ENCODE measurements at regions of chr1 and their contacts with region 1.

Region 1: GRCh38 chr1:151934048-151934493 is 24.8 kb upstream of the THEM4 start:
- DNase-seq: peak; percentile 16
- H3K4me3 ChIP-seq: no peak overlapping the region
- H3K27ac ChIP-seq: no peak overlapping the region
- H3K27me3 ChIP-seq: peaks cover 17% of the 10 kb centered on the region
- CTCF ChIP-seq: peak; percentile 94

Region 2: DNA sequence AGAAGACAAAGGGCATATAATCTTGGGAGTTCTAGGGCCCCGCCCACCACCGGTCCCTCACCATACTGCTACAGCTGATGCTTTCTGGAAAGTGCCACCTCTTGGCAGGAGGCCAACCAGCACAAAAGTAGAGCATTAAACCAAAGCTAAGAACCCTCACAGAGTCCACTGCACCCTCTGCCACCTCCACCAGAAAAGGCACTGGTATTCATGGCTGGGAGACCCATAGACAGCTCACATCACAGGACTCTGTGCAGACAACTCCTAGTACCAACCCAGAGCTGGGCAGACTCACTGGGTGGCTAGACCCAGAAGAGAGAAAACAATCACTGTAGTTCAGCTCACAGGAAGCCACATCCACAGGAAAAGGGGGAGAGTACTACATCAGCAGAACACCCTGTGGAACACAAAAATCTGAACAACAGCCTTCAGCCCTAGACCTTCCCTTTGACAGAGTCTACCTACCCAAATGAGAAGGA is 35.5 kb before region 1 on chr1:
- CTCF ChIA-PET with region 1: no interaction called
- POLR2A ChIA-PET with region 1: no interaction called
- DNase-seq: no peak
- H3K4me3 ChIP-seq: no peak overlapping the region
- H3K27ac ChIP-seq: no peak overlapping the region
- H3K27me3 ChIP-seq: no peaks in the 10 kb centered on the region
- CTCF ChIP-seq: no peak

Region 3: DNA sequence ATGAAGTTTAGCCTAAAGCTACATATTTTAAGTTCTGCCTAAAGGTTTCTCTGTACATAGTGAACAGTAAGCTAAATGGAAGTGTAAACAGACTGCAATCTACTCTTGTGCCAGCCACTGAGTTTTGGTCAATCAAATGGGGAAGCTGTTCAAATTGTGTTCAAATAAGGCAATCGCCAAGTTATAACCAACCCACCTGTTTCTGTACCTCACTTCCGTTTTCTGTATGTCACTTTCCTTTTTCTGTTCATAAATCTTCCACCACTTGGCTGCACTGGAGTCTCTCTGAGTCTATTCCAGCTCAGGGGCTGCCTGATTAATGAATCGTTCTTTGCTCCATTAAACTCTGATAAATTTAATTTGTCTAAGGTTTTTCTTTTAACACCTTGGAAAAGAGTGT is 13.9 kb before region 1 on chr1:
- CTCF ChIA-PET with region 1: interaction called, 20 read pairs
- POLR2A ChIA-PET with region 1: no interaction called
- DNase-seq: no peak
- H3K4me3 ChIP-seq: no peak overlapping the region
- H3K27ac ChIP-seq: no peak overlapping the region
- H3K27me3 ChIP-seq: peaks cover 17% of the 10 kb centered on the region
- CTCF ChIP-seq: no peak

Region 4: DNA sequence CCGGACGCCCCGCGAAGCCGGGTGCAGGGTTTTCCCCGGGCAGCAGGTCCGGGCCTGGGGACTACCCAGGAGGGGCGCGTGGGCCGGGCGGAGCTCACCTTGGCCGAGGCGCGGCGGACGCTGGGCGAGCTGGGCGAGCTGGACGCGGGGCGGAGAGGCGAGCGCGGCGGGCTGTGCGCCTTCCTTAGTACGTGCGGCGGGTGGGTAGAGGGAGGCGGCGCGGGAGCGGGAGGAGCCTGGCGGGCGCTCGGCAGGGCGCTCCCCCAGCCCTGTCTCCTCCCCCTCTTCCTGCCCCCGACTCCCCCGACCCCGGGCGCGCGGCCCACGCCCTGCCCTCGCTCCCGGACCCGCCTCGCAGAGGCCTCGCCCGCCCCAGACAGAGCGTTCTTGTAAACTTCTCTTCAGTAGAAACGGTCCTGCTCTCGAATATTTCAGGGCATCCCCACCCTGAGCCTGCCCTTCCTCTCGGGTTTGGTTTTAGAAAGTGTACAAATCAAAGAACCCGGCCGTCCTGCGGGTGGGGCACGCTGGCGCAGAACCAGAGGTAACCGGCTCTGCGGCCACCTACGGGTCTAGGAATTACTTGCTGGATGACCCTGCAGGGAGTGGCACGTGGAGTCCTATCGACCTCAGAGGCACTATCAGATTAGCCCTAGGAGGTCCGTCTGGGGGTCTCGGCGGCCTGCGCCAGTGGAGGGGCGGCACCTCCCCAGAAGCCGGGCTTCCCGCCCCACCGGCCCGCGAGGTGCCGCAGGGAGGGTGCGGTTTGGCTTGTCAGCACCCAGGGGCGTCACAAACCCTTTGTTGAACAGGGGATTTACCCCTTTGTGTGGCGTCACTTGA is 59.8 kb after region 1 on chr1 and contains the start of gene S100A10:
- CTCF ChIA-PET with region 1: interaction called, 251 read pairs
- POLR2A ChIA-PET with region 1: no interaction called
- DNase-seq: no peak
- H3K4me3 ChIP-seq: peak within 1 kb of the TSS; percentile 94
- H3K27ac ChIP-seq: peak within 1 kb of the TSS; percentile 61
- H3K27me3 ChIP-seq: no peaks in the 10 kb centered on the region
- CTCF ChIP-seq: no peak
- polyA plus RNA-seq, gene S100A10: 188 and 200 TPM in 2 replicates

Region 5: GRCh38 chr1:152013664-152014237 is 79.7 kb after region 1 on chr1:
- CTCF ChIA-PET with region 1: interaction called, 65 read pairs
- POLR2A ChIA-PET with region 1: no interaction called
- DNase-seq: no peak
- H3K4me3 ChIP-seq: no peak overlapping the region
- H3K27ac ChIP-seq: no peak overlapping the region
- H3K27me3 ChIP-seq: peaks cover 24% of the 10 kb centered on the region
- CTCF ChIP-seq: peak; percentile 76

Region 6: GRCh38 chr1:152034646-152035405 is 100.8 kb after region 1 on chr1:
- CTCF ChIA-PET with region 1: interaction called, 10 read pairs
- POLR2A ChIA-PET with region 1: no interaction called
- DNase-seq: no peak
- H3K4me3 ChIP-seq: peak overlapping the region; percentile 74
- H3K27ac ChIP-seq: peak overlapping the region; percentile 78
- H3K27me3 ChIP-seq: no peaks in the 10 kb centered on the region
- CTCF ChIP-seq: peak; percentile 71